Sciatic nerve (tissue), 2 donors: ENCODE measurements at regions of chr10 and their contacts with region 1.

Region 1: DNA sequence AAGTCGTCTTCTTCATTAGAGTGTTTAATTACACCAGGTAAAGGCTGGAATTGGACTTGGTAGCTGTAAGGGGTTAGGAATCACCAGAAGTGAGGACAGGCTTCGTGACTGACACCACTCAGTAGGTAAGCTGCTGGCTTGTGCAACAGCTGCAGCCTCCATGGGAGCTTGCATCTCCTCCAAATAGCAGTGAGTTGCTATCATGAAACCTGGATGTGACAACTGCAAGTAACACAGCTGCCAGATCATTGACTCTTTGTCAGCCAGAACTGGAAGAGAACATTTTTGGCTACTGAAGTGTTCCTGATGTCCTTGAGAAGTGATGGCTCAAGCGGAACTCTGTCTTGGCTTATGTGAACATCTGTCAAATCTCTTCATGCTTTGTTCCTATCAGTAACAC is 64.1 kb upstream of the MSRB2 start:
- DNase-seq: no peak
- ATAC-seq: no peak

Region 2: DNA sequence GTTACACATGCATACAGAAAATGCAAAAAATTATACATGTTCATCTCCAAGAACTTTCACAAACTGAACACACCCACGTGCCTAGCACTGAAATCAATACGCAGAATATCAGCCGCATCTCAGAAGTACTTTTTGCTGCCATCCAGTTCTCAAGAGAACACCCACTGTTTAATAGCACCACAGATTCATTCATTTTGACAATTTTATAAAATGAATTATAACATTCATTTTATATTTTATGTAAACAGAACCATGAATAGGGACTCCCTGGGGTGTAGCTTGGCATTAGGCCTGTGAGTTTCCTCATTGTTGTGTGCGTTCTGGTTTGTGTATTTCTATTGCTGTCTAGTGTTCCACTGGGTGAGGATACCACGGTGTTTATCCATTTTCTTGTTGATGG is 239.7 kb before region 1 on chr10:
- intact Hi-C with region 1: no loop called
- DNase-seq: no peak
- ATAC-seq: no peak

Region 3: DNA sequence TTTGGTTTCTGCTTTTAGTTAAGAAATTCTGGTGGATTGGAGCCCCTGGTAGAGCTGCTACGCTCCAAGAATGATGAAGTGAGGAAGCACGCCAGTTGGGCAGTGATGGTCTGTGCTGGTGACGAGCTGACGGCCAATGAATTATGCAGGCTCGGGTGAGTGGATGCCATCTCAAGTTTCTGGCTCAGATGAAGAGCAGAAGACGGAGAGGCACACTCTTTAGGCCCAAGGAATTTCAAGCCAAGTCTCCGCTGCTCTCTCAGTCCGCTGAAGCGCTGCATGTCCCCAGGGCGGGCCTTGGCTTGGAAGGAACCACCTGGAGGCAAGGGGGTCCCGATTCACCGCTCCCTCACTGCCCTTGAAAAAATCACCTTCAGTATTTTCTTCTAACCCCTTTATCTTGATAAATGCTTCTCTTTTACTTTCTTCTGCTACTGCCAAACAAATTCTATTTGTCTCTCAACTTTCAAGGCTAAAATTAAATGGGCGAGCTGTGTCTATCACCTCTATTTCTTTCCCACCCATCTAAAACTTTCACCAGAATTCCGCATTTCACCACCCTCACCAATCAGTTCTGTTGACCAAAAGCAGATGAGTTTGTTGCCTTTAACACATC is 29.3 kb before region 1 on chr10:
- intact Hi-C with region 1: loop called (anchors 1 kb)
- DNase-seq: no peak
- ATAC-seq: no peak

Region 4: DNA sequence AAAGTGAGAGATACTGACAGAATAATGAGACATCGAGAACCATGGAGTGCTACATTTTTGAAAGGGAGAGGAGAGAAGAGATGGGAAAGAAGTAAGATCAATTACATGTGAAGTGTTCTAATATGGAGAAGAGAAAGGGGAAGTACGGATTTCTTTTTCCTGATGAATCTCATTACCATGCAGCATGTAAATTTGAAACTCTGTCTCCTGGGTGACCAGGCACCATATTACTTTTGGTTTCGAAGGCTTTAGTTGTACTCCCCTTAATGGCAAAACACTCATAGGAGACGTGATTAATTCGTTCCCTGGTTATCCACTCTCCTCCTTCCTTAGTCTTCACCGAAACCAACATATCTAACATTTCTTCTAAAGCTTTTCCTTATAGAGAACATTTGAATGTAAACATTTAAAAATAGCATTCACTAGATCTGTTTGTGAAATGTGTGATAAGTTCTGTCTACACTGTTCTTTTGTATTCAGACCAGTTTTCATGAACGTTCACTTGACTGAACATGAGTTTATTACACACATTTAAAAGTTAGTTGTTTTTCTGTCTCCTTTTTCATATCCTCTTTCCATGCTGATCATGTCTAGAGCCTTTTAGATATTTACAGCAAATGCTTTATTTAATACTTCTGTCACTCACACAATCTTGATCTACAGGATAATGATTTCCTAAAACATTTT is 16.2 kb before region 1 on chr10:
- intact Hi-C with region 1: no loop called
- DNase-seq: no peak
- ATAC-seq: no peak

Region 5: DNA sequence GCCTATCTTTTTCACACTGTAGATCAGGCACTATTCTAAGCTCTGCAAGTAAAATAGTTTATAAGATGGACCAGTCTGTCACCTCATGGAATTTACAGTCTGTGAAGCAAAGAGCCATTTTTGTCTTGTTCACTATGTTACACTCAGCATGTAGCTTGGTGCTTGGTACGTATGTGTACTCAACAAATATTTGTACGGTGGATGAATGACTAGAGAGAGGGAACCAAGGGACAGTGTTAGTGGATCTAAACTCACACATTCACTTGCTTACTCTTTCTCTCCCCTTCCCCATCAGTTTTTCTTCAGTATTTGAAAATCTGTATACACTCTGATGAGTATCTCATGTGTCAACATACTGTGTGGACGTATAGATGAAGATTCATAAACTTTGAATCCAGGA is 206.7 kb after region 1 on chr10:
- intact Hi-C with region 1: no loop called
- DNase-seq: no peak
- ATAC-seq: no peak